ENCODE measurements at regions of chr16 and their contacts with region 1.

Region 1: DNA sequence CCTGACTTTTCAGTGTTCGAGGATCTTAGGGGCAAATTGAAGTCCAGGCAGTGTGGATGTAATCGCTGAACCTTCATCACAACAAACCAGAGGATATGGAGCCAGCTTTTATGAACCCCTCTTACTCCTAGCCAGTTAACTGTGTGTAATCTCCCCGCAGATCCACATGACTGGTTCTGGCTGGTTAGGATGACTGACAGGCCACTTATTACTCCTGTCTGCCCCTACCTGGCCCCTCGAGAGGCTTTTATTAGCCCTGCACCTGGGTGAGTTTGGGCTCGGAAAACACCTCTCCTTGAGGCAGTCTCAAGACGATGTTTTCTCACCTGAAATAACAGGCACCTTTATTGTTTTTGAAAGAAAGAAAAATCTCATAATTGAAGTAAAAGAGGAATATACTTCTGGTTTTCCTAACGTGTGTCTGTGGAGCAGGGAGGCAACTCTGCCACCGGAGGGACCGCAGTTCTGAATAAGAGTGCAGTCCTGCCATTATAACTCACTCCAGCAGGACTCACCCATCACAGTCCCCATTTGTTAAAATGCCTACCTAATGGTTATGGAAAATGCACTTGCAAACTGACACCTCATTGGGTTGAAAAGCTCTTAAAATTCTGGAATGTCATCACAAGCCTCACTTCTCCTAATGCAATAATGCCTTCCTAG is 291.9 kb upstream of the N4BP1 start:
- H3K4me3 Mint-ChIP-seq: no peak overlapping the region
- H3K27ac Mint-ChIP-seq: no peak overlapping the region
- H3K4me1 Mint-ChIP-seq: no peaks in the 10 kb centered on the region
- H3K27me3 Mint-ChIP-seq: no peaks in the 10 kb centered on the region

Region 2: GRCh38 chr16:48949636-48950035 is 47.8 kb after region 1 on chr16:
- intact Hi-C with region 1: loop called (anchors 5 kb)
- H3K4me3 Mint-ChIP-seq: no peak overlapping the region
- H3K27ac Mint-ChIP-seq: no peak overlapping the region
- H3K4me1 Mint-ChIP-seq: no peaks in the 10 kb centered on the region
- H3K27me3 Mint-ChIP-seq: no peaks in the 10 kb centered on the region